ENCODE measurements at regions of chr1 and their contacts with region 1.

Region 1: GRCh38 chr1:230891413-230891812 is 23.1 kb upstream of the C1orf198 start:
- DNase-seq: no peak
- ATAC-seq: no peak
- H3K4me3 Mint-ChIP-seq: no peak overlapping the region
- H3K27ac Mint-ChIP-seq: no peak overlapping the region
- H3K4me1 Mint-ChIP-seq: no peaks in the 10 kb centered on the region
- H3K27me3 Mint-ChIP-seq: peaks cover 10% of the 10 kb centered on the region

Region 2: DNA sequence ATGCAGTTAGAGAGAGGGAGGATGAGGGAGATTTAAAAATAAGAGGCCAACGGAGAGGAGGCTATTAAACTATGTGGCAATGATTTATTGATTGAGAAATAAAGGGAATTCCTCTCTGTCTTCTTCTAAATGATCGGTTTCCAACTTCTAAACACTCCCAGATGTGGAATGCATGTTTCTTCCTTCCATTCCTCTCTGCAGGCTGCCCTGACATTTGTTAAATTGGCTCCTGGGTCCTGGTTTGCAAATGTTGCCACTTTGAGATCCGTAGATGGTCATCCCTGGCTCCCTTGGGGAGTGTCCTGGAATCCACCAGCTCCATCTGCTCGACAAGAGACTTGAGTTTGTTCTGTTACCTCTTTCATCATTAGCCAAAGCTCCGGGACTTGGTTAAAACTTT is 12.8 kb before region 1 on chr1:
- CTCF ChIA-PET with region 1: no interaction called
- POLR2A ChIA-PET with region 1: interaction called, 11 read pairs
- intact Hi-C with region 1: no loop called
- DNase-seq: no peak
- ATAC-seq: no peak
- H3K4me3 Mint-ChIP-seq: no peak overlapping the region
- H3K27ac Mint-ChIP-seq: no peak overlapping the region
- H3K4me1 Mint-ChIP-seq: no peaks in the 10 kb centered on the region
- H3K27me3 Mint-ChIP-seq: peaks cover 37% of the 10 kb centered on the region

Measured in activated CD4-positive, alpha-beta T cell treated with anti-CD3 and anti-CD28 coated beads for 36 hours (primary cell).